Activated naive CD4-positive, alpha-beta T cell treated with anti-CD3 and anti-CD28 coated beads, Interleukin-2, amount 10 ng/mL, durations not matched to agents 7 days and 5 days (primary cell): ENCODE measurements at regions of chr10 and their contacts with region 1.

Region 1: DNA sequence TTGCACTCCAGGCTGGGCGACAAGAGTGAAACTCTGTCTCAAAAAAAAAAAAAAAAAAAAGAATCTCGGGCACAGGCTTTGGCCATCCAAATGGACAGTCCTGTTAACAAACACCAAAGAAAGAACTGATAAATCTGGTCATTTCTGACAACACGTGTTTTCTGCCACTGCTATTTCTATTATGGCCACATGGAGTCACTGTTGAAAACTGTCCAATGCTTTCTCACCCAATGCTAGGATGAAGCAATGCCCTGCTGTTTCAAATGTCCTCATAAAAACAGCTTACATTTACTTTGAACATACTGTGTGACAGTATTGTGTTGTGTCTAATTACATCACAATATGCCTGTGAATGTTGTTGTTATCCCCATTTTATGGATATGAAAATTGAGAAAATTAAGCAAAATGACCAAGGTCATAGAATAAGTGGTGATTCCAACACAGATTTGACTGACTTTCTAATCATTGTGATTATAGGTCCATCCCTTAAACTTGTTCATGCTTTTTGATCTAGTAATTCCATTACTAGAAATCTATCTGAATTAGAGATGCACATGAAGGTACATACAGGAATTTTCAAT is 19.9 kb upstream of the MAP3K8 start:
- DNase-seq: peak; percentile 46
- H3K4me3 Mint-ChIP-seq: no peak overlapping the region
- H3K27ac Mint-ChIP-seq: no peak overlapping the region
- H3K4me1 Mint-ChIP-seq: peaks cover 28% of the 10 kb centered on the region
- H3K27me3 Mint-ChIP-seq: peaks cover 8% of the 10 kb centered on the region

Region 2: GRCh38 chr10:30098613-30099012 is 315.5 kb before region 1 on chr10:
- CTCF ChIA-PET with region 1: no interaction called
- DNase-seq: no peak
- H3K4me3 Mint-ChIP-seq: no peak overlapping the region
- H3K27ac Mint-ChIP-seq: no peak overlapping the region
- H3K4me1 Mint-ChIP-seq: no peaks in the 10 kb centered on the region
- H3K27me3 Mint-ChIP-seq: peaks cover 21% of the 10 kb centered on the region

Region 3: DNA sequence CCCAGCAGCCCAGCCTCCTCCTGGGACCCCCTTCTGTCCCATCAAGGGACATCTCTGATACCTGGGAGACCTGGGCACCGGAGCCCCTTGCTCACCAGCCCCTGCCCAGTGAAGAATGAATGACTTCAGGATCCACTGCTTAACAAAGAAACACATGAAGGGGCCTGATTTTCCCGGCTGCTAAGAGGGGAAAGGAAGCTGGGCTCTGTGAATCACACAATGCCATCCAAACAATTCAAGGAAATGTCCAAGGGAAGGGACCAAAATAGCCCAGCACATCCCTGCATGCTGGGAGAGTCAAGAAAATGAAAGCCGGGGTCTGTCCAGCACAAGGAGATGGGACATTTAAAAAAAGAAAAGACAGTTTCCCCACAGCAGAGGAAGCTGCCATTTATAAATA is 226.0 kb before region 1 on chr10:
- CTCF ChIA-PET with region 1: no interaction called
- DNase-seq: no peak
- H3K4me3 Mint-ChIP-seq: no peak overlapping the region
- H3K27ac Mint-ChIP-seq: no peak overlapping the region
- H3K4me1 Mint-ChIP-seq: no peaks in the 10 kb centered on the region
- H3K27me3 Mint-ChIP-seq: peaks cover 15% of the 10 kb centered on the region

Region 4: DNA sequence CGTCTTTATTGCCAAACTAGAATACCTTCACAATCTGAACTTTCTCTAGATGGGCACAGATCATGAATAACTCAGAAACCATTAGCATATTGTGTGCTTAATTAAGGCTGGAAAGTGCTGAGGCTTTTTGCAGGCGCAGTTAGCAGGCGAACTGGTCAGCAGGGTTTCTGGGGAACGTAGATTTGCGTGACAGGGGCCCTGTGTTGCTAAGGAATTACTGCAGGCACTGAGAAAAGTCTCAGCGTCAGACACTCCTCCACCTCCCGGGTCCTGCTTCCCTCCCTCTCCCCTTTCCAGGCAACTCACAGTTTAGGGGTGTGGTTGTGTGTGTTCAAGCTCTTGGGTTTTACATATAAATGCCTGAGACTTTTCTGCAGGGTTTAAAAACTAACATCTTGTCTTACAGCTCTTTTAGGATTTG is 22.1 kb after region 1 on chr10:
- CTCF ChIA-PET with region 1: interaction called, 12 read pairs
- DNase-seq: no peak
- H3K4me3 Mint-ChIP-seq: peak overlapping the region; percentile 92
- H3K27ac Mint-ChIP-seq: peak overlapping the region; percentile 88
- H3K4me1 Mint-ChIP-seq: peaks cover 69% of the 10 kb centered on the region
- H3K27me3 Mint-ChIP-seq: peaks cover 5% of the 10 kb centered on the region

Region 5: DNA sequence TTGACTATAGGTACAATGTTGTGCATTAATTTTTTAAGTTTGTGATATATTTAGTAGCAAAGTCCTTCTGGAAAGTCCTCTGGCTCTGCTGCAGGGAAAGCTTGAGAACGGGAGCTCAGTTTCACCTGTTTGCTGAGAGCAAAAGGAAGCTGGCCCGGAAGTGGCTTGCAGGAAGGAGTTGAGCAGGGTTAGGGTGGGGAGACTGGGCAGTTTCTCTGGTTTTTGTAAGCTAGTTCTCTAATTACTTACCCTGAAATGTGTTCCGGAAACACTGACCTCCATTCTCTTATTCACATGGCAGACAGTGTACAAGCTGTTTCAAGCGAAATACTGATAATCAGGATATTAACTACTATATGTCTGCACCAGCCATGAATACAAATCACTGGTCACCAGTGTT is 42.2 kb after region 1 on chr10:
- CTCF ChIA-PET with region 1: interaction called, 11 read pairs
- DNase-seq: peak; percentile 57
- H3K4me3 Mint-ChIP-seq: peak overlapping the region; percentile 52
- H3K27ac Mint-ChIP-seq: peak overlapping the region; percentile 87
- H3K4me1 Mint-ChIP-seq: peaks cover 41% of the 10 kb centered on the region
- H3K27me3 Mint-ChIP-seq: no peaks in the 10 kb centered on the region

Region 6: GRCh38 chr10:30534465-30535144 is 120.5 kb after region 1 on chr10:
- CTCF ChIA-PET with region 1: interaction called, 34 read pairs
- DNase-seq: peak; percentile 82
- H3K4me3 Mint-ChIP-seq: no peak overlapping the region
- H3K27ac Mint-ChIP-seq: no peak overlapping the region
- H3K4me1 Mint-ChIP-seq: peaks cover 41% of the 10 kb centered on the region
- H3K27me3 Mint-ChIP-seq: peaks cover 4% of the 10 kb centered on the region

Region 7: GRCh38 chr10:30591249-30591670 is 177.2 kb after region 1 on chr10:
- CTCF ChIA-PET with region 1: interaction called, 14 read pairs
- DNase-seq: peak; percentile 55
- H3K4me3 Mint-ChIP-seq: no peak overlapping the region
- H3K27ac Mint-ChIP-seq: no peak overlapping the region
- H3K4me1 Mint-ChIP-seq: no peaks in the 10 kb centered on the region
- H3K27me3 Mint-ChIP-seq: peaks cover 46% of the 10 kb centered on the region